ENCODE measurements at regions of chrX and their contacts with region 1.

Region 1: DNA sequence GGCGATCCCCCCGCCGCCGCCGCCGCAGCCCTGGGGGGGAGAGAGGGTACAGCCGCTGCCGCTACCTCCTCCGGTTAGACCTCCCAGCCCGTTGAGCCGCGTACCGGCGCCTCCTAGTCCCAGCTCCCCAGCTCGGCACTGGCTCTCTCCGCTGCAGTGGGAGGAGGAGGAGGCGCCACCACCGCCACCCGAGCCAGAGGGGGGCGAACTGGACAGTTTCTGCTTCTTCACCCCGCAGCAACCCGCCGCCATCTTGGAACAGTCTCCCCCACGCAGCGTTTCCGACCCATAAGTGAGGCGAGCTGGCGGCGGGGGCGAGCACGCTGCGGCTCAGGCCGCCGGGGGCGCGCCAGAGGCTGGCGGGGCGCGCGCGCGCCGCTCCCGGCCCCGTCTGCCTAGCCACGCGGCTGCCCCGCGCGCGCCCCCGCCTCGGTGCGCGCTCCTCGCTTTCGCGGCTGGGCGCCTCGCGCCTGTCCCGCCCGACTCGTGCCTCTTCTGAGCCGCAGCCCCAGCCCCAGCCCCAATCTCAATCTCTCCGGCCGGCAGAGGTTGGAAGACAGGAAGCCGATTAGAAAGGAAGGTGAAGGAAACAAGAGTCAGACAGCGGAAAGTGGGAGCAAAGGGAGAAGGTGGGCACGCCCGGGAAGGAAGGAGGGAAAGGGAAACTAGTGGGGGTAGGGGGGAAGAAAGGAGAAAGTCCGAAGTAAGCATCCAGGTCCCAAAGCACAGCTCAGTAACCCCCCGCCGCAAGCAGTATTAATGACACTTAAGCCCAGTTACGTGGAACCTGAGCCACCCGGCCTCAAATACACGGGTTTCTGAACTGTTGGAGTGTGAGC is at the start of gene AMMECR1:
- DNase-seq: peak; percentile 87
- H3K4me3 ChIP-seq: peak within 1 kb of the TSS; percentile 67
- H3K27ac ChIP-seq: peak within 1 kb of the TSS; percentile 78
- H3K4me1 ChIP-seq: no peaks in the 10 kb centered on the region
- H3K27me3 ChIP-seq: no peaks in the 10 kb centered on the region
- CTCF ChIP-seq: no peak
- total RNA-seq, gene AMMECR1: 11.6 and 13.0 TPM in 2 replicates

Region 2: DNA sequence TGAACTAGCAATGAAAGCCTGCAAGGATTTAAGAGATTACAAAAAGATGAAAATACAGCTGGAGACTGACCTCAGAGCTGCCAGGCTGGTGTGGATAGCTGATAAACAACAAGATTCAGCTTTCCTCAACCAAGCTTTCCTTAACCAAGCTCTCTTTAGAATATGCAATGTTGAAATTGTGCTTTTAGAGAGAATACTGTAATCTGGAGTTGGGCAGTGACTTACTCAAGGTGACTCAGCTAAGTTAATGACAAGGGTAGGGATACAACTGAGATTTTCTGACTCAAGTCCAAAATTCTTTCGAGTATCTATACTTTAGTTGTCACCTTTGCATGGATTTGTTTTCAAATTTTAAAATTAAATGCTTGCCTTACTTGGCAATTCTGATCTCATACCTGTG is 98.1 kb before region 1 on chrX:
- CTCF ChIA-PET with region 1: no interaction called
- POLR2A ChIA-PET with region 1: no interaction called
- intact Hi-C with region 1: loop called (anchors 5 kb)
- DNase-seq: no peak
- H3K4me3 ChIP-seq: no peak overlapping the region
- H3K27ac ChIP-seq: no peak overlapping the region
- H3K4me1 ChIP-seq: peaks cover 45% of the 10 kb centered on the region
- H3K27me3 ChIP-seq: no peaks in the 10 kb centered on the region
- CTCF ChIP-seq: no peak

Measured in A673 (cell line).